Breast epithelium (tissue), 4 donors: ENCODE measurements at regions of chr14 and their contacts with region 1.

Region 1: DNA sequence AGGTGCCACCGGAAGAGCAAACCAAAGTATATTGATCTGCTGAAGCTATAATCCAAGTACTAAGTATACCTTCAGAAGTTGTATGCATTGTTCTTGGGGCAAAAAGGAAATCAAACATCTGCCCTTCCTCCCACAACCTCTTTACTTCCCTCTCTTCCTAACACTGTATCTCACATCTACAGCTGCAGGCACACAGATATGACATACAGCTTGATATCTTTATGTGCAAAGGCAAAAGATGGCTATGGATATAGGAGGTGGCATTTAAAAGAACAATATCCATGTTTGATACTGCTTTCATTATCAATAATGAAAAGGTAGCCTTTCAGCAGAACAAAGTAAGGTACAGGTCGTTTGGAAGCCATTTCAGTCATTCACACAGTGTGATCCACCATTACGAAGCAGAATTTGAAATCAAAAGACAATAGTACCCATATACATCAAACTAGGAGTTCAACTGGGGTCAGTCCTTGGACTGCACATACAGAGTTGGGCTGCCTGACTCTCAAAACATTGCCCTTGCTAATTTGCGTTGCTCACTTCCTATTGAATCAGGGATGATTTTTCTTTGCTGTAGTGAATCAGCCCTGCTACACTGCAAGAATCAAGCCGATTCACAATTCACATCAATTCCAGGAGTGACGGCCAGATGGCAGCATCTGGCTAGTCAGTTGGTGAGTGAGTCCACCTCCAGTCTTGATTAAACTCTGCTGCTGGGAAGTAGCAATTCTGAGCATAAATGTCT is 8.9 kb downstream of the ANG start:
- DNase-seq: peak in 1 of 2 donors; percentile 50
- H3K4me3 ChIP-seq: no peak overlapping the region
- H3K27ac ChIP-seq: no peak overlapping the region
- H3K4me1 ChIP-seq: no peaks in the 10 kb centered on the region
- H3K27me3 ChIP-seq: no peaks in the 10 kb centered on the region
- CTCF ChIP-seq: peak; percentile 26 to 81 (median 70)
- POLR2A ChIP-seq: no peak

Region 2: DNA sequence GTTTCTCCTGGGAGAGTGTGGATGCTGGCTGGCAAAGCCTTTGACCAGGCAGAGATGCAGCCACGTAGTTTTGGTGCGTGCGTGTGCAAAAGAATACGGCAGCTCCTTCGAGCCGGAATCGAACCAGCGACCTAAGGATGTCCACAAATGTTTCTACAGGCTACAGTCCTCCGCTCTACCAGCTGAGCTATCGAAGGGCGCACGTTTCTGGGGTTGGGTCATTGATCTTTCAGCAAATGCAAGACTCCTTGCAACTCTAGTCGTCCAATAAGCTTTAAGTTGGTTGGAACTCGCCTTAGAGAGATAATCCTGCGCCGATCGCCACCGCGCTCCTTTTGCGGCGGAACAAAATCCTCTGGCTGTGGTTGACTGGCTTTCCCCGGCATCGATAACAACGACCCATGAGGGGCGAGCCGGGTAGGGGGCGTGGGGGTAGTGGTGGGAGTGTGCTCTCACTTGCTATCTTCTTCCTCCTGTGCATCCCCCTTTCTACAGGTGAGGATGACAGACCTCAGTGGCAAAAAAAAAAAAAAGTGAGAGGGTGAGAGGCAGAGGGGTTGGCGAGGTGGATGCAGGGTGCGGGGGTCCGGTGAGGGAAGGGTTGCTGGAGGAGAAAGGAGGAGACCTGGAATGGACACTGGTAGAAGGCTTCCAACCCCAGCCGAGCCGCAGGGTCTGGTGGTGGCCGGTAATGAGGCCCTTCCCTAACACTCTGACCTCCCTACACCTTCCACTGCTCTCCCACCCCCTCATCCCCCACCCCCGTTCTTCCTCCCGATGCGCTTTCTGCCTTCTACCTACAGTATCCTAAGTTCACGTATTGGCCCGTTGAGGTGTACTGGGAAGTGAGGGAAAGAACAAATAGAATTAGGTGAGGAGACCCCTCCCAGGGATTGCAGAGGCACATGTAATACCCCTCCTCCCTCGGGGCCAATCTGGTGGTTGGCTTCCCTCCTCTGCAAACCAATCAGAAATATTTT is 44.2 kb before region 1 on chr14:
- intact Hi-C with region 1: no loop called
- DNase-seq: no peak
- H3K4me3 ChIP-seq: peak overlapping the region in 1 of 3 donors; percentile 12
- H3K27ac ChIP-seq: no peak overlapping the region
- H3K4me1 ChIP-seq: no peaks in the 10 kb centered on the region
- H3K27me3 ChIP-seq: peaks cover 4 to 56% of the 10 kb centered on the region in 2 donors
- CTCF ChIP-seq: no peak
- POLR2A ChIP-seq: no peak

Region 3: GRCh38 chr14:20855652-20856291 is 158.3 kb after region 1 on chr14:
- intact Hi-C with region 1: loop called (anchors 5 kb)
- DNase-seq: peak in 1 of 2 donors; percentile 45
- H3K4me3 ChIP-seq: no peak overlapping the region
- H3K27ac ChIP-seq: no peak overlapping the region
- H3K4me1 ChIP-seq: no peaks in the 10 kb centered on the region
- H3K27me3 ChIP-seq: no peaks in the 10 kb centered on the region
- CTCF ChIP-seq: peak; percentile 62 to 89 (median 87)
- POLR2A ChIP-seq: no peak